A673 (cell line): ENCODE measurements at regions of chr11 and their contacts with region 1.

Region 1: DNA sequence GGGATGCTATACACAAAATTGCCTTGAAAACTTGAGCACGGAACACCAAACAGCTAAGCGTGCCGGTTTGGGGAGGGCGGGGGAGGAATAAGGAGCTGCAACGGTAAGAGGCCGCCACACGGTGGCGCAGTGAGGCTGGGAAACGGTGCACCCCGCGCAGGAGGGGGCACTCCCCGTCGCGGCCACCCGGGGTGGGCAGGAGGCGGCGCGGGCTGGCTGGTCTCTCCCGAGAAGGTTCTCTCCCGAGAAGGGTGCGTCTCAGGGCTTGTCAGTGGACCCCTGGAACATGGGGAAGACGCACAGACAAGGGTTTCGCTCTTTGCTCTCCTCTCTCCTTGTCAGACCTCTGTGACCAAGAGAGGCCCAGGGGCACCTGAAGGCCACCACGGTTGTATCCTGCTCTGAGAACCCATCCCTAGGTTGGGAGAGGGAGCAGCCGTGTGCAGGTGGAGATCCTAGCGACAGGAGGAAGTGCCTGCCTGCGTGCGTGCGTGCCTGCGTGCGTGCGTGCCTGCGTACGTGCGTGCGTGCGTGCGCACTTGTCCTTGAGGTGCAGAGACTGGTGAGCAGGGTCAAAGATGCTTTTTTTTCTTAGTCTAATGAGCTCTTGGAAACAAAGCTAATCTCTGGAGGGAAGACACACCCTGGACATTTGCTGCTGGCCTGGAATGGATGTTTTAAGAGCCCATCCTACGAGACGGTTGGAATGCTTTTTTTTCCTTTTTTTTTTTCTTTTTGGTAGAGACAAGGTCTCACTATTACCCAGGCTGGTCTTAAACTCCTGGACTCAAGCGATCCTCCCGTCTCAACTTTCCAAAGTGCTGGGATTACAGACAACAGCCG is 18.1 kb upstream of the JAM3 start:
- DNase-seq: peak; percentile 78
- H3K4me3 ChIP-seq: no peak overlapping the region
- H3K27ac ChIP-seq: no peak overlapping the region
- H3K4me1 ChIP-seq: peaks cover 13% of the 10 kb centered on the region
- H3K27me3 ChIP-seq: no peaks in the 10 kb centered on the region
- CTCF ChIP-seq: peak; percentile 98

Region 2: DNA sequence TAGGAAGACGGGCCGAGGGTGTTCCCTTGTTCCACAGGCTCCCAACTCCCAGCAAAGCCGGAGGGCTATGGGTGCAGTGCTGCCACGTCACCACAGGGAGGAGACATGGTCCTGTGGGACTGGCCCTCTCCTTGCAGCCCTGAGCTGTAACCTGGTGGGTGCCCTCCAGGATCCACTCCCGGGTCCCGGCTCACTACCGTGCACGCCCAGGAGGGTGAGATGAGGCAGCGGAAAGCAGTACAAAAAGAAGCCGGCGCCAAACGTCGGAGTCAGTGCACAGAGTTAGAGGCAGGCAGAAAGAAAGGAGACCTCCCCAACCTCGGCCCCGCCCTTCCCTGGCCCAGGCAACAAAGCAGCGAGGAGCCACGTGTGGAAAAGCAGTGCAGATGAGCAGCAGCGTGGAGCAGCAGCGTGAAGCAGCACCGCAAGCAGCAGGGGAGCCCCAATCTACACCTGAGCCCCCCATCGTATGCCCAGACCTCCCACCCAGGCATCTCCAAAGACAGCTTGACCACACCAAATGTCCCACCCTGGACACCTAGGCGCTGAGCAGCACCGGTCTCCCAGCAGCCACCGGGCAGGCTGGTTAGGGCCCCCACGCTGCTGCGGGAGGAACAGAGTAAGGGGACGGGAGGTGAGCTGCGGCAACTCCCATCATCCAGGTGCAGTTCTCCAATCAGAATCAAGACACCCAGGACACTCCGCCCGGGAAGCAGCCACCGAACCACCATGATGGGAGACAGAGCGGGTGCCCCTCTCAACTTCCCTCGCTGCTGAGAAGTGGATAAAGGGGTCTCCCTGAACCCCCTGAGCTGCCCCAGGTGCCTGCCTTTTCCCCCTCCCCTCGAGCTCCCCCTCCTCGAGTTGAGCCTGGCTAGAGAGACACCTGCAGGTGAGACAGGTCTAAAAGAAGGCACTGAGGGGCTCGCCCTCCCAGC is 122.8 kb before region 1 on chr11:
- CTCF ChIA-PET with region 1: interaction called, 8 read pairs
- POLR2A ChIA-PET with region 1: no interaction called
- intact Hi-C with region 1: loop called (anchors 1 kb)
- DNase-seq: peak; percentile 74
- H3K4me3 ChIP-seq: no peak overlapping the region
- H3K27ac ChIP-seq: no peak overlapping the region
- H3K4me1 ChIP-seq: no peaks in the 10 kb centered on the region
- H3K27me3 ChIP-seq: no peaks in the 10 kb centered on the region
- CTCF ChIP-seq: peak; percentile 86

Region 3: DNA sequence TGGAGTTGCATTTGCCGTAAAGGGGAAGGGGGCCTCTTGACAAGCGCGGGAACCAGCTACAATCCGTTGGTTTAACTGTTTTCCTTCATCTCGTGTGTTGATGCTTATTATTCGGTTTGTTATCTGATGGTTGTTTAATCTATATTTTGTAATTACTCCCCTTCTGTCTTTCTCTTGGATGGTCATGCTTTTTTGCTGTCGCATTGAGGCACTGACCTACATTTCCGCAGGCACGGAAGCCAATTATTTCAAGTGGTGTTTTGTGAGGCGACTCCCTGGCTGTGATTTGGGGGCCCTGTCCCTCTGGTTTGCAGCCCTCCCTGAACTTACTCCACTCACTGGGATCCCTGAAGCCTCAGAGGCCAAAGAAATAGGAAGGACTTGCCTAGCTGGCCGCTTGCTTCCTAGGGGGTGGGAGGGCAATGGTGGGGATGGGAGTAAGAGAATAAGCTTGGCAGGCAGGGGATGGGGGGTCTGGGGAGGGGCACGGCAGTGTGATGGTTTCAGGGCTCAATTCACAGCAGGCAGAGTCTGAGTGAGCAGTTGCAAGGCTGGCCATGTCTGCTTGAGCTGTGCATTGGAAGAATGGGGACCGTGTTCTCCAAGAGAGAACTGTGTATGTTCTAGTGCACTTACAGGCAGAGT is 527.1 kb after region 1 on chr11:
- CTCF ChIA-PET with region 1: interaction called, 10 read pairs
- POLR2A ChIA-PET with region 1: no interaction called
- intact Hi-C with region 1: no loop called
- DNase-seq: no peak
- H3K4me3 ChIP-seq: no peak overlapping the region
- H3K27ac ChIP-seq: no peak overlapping the region
- H3K4me1 ChIP-seq: no peaks in the 10 kb centered on the region
- H3K27me3 ChIP-seq: no peaks in the 10 kb centered on the region
- CTCF ChIP-seq: no peak